K562 (cell line): ENCODE measurements at regions of chr12 and their contacts with region 1.

Region 1: DNA sequence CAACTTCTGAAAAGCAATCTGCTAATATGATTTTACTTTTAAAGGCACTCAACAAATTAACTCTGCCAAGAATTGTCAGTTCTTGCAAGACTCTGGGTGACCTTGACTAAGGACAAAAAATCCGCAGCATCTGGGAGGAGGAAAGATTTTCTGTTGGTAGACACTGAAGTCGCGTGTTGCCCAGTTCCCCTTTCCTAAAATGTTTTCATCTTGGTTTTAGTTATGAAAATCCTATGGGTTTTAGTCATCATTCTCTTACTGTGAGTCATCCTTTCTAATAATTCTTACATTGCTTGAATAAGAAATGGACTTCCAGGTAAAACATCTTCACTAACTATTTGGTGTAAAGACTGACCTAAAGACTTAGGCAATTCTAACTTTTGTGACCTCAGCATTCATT is 9.1 kb downstream of the GSG1 start:
- DNase-seq: no peak
- ATAC-seq: no peak
- H3K4me3 ChIP-seq: no peak overlapping the region
- H3K27ac ChIP-seq: no peak overlapping the region
- H3K4me1 ChIP-seq: no peaks in the 10 kb centered on the region; a peak in 1 of 5 replicates
- H3K27me3 ChIP-seq: peaks cover 6 to 39% of the 10 kb centered on the region in 2 experiments; a peak in 3 of 5 replicates
- CTCF ChIP-seq: no peak
- EP300 ChIP-seq: no peak
- POLR2A ChIP-seq: no peak
- RAD21 ChIP-seq: no peak

Region 2: DNA sequence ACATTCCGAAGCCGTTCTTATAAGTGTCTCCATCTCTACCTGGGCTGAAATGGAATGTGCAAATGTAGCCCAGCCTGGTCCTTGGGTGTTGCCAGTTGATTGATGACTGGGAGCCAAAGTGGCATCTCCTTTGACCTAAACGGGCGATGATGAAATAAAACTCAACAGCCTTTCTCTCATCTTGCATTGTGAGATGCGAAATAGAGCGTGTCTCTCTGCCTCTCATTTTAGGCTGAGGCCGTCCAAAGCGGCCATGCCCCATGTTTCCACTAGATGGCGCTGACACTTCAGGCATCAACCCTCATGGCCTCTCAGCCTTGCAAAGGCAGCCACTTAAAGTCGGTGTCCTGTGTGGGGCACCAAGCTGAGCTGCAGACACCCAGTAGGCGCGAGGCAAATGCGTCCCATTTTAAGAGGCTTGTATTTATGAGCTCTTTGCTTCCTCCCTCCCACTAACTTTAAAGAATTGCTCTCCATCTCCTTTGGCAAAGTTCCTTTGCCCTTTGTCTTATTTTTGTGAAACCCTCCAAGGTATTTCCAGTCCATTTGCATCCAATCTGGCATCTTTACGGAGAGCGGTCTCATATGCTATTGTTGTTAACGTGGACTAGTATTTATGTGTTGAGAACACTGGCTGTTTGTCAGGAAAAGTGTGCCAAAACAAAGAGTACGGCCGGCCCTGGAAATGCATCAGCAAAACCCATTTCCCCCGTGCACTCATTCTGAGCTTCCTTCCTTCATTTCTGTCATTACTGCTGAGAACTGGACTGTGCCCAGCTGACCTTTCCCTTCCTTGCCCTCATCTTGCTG is 178.0 kb before region 1 on chr12:
- CTCF ChIA-PET with region 1: no interaction called
- POLR2A ChIA-PET with region 1: no interaction called
- in situ Hi-C with region 1: no loop called
- intact Hi-C with region 1: loop called (anchors 10 kb)
- DNase-seq: peak; percentile 66 to 84 (median 70)
- ATAC-seq: peak; percentile 99
- H3K4me3 ChIP-seq: no peak overlapping the region
- H3K27ac ChIP-seq: no peak overlapping the region
- H3K4me1 ChIP-seq: no peaks in the 10 kb centered on the region; a peak in 1 of 5 replicates
- H3K27me3 ChIP-seq: peaks cover 3 to 17% of the 10 kb centered on the region in 2 experiments; a peak in 3 of 5 replicates
- CTCF ChIP-seq: peak; percentile 87 to 94 (median 92)
- EP300 ChIP-seq: no peak
- POLR2A ChIP-seq: no peak
- RAD21 ChIP-seq: peak; percentile 87 to 93

Region 3: GRCh38 chr12:13023811-13024530 is 70.4 kb before region 1 on chr12:
- CTCF ChIA-PET with region 1: no interaction called
- POLR2A ChIA-PET with region 1: no interaction called
- in situ Hi-C with region 1: no loop called
- intact Hi-C with region 1: loop called (anchors 5 kb)
- DNase-seq: peak; percentile 9 to 35 (median 15)
- ATAC-seq: peak; percentile 81; the same call in 2 of the 3 replicates
- H3K4me3 ChIP-seq: no peak overlapping the region
- H3K27ac ChIP-seq: no peak overlapping the region
- H3K4me1 ChIP-seq: no peaks in the 10 kb centered on the region; a peak in 2 of 5 replicates
- H3K27me3 ChIP-seq: no peaks in the 10 kb centered on the region
- CTCF ChIP-seq: peak; percentile 37 to 61 (median 40); a peak in 5 of 6 replicates
- EP300 ChIP-seq: no peak
- POLR2A ChIP-seq: no peak
- RAD21 ChIP-seq: peak; percentile 50 to 55; a peak in 3 of 4 replicates

Region 4: DNA sequence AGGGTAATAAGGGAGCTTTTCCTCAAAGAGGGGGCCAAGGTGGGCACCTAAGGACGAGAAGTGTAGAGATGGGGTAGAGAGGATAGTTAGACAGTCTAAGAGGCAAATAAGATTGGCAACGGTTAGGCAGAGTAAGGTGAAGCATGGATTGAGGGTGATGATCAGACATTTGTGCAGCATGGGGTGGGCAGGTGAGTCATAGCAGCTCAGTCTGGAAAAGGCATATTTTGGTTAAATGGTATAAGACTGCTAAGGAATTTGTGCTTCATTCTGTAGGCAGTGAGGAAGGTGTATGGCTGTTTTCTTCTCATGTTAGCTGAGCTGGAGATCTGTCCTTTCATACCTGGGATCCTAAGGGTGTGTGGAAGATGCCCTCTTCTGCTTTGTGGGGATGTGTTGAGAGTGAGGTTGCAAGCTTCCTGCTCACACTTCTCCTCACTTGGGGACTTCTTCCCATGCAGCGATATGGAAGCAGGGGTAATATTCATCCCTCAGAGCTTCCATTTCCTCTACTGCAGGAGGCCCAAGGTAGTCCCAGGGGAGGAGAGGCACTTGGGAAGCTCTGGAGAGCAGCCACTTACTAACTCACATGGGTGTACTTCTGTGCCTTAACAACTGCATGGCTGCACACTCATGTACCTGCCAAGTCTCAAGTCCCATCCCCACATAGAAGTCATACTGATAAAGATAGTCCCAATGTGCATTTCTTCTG is 19.8 kb before region 1 on chr12:
- CTCF ChIA-PET with region 1: no interaction called
- POLR2A ChIA-PET with region 1: no interaction called
- in situ Hi-C with region 1: no loop called
- intact Hi-C with region 1: no loop called
- DNase-seq: no peak
- ATAC-seq: no peak
- H3K4me3 ChIP-seq: no peak overlapping the region
- H3K27ac ChIP-seq: no peak overlapping the region
- H3K4me1 ChIP-seq: peaks cover 0 to 6% of the 10 kb centered on the region in 2 experiments; a peak in 2 of 5 replicates
- H3K27me3 ChIP-seq: no peaks in the 10 kb centered on the region
- CTCF ChIP-seq: no peak
- EP300 ChIP-seq: no peak
- POLR2A ChIP-seq: no peak
- RAD21 ChIP-seq: no peak

Region 5: GRCh38 chr12:13203034-13203922 is 108.9 kb after region 1 on chr12:
- CTCF ChIA-PET with region 1: no interaction called
- POLR2A ChIA-PET with region 1: no interaction called
- in situ Hi-C with region 1: loop called (anchors 5 kb)
- intact Hi-C with region 1: loop called (anchors 2 kb)
- DNase-seq: peak in 2 of 4 experiments; percentile 8 to 13
- ATAC-seq: peak; percentile 67
- H3K4me3 ChIP-seq: no peak overlapping the region
- H3K27ac ChIP-seq: no peak overlapping the region
- H3K4me1 ChIP-seq: no peaks in the 10 kb centered on the region; a peak in 1 of 5 replicates
- H3K27me3 ChIP-seq: peaks cover 0 to 29% of the 10 kb centered on the region in 2 experiments; a peak in 4 of 5 replicates
- CTCF ChIP-seq: peak; percentile 25 to 43 (median 39); a peak in 3 of 6 replicates
- EP300 ChIP-seq: no peak
- POLR2A ChIP-seq: no peak
- RAD21 ChIP-seq: peak; percentile 14 to 48; a peak in 2 of 4 replicates

Region 6: GRCh38 chr12:13241833-13242488 is 147.6 kb after region 1 on chr12:
- CTCF ChIA-PET with region 1: no interaction called
- POLR2A ChIA-PET with region 1: no interaction called
- in situ Hi-C with region 1: no loop called
- intact Hi-C with region 1: no loop called
- DNase-seq: no peak
- ATAC-seq: no peak
- H3K4me3 ChIP-seq: no peak overlapping the region
- H3K27ac ChIP-seq: no peak overlapping the region
- H3K4me1 ChIP-seq: no peaks in the 10 kb centered on the region
- H3K27me3 ChIP-seq: no peaks in the 10 kb centered on the region
- CTCF ChIP-seq: no peak
- EP300 ChIP-seq: no peak
- POLR2A ChIP-seq: no peak
- RAD21 ChIP-seq: no peak

Region 7: DNA sequence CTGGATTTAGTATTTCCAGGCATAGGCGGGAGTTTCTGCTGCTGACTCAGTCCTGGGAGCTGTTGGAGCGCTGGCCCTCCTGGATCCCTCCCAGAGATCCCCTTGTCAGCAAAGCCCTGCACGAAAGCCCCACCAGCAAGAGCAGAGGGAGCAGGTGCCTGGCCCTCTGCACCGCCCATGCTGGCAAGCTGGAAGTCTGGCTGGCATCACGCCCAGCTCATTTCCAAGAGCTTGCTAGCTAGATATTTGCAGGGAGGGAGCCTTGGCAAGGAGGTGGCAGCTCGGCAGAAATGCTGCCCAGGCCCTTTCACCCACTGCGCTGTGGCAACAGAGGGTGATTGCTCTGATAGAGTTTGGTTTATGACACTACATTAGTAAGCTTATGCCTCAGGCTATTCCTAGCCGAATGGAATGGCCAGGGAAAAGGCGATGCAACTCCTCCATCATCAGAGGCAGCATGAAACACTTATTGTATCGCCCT is 296.1 kb after region 1 on chr12:
- CTCF ChIA-PET with region 1: no interaction called
- POLR2A ChIA-PET with region 1: no interaction called
- in situ Hi-C with region 1: no loop called
- intact Hi-C with region 1: no loop called
- DNase-seq: no peak
- ATAC-seq: no peak
- H3K4me3 ChIP-seq: no peak overlapping the region
- H3K27ac ChIP-seq: no peak overlapping the region
- H3K4me1 ChIP-seq: no peaks in the 10 kb centered on the region
- H3K27me3 ChIP-seq: no peaks in the 10 kb centered on the region
- CTCF ChIP-seq: no peak
- EP300 ChIP-seq: no peak
- POLR2A ChIP-seq: no peak
- RAD21 ChIP-seq: no peak